BJ (cell line): ENCODE measurements at regions of chr20 and their contacts with region 1.

Region 1: DNA sequence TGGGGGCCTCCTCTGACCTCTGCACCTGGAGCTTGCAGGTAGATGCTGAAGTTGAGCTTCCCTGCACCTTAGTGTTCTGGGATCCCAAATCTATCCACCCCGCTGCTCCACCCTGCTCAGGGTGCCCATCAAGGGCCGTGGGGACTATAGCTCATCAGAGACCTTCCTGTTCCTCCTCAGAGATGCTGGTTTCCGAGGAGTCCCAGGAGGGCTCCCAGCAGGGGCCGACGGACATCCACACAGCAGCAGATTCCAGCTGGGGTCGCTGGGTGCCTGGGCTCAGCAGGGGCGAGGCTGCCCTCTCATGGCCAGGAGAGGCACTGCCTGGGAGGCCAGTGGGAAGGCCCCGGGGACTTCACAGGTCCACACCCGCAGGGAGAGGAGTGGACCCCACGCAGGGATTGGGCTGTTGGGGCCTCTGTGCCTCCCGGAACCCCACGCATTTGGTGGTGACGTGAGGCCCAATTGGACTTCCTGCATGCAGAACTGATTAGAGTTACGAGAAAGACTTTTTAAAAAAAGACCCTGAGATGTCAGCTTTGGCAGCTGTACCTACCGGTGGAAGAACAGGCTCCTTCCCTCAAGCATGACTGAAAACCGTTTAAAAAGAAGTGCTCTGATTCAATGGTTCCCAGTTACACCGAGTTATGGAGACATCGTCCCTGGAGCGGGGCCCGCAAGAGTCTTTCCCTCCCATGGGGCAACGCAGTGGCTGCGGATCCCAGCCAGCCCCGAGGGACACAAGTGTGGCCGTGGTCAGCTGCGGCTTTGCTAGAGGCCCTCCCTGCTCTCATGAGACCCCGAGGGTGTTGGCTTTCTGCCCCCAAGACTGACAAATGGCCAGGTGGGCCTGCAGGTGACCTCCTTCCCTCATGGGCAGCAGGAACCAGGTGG is 25.3 kb upstream of the SLCO4A1 start:
- DNase-seq: no peak
- H3K4me3 ChIP-seq: no peak overlapping the region
- H3K27me3 ChIP-seq: peaks cover 2% of the 10 kb centered on the region; the same call in 1 of the 2 replicates
- CTCF ChIP-seq: peak; percentile 99

Region 2: DNA sequence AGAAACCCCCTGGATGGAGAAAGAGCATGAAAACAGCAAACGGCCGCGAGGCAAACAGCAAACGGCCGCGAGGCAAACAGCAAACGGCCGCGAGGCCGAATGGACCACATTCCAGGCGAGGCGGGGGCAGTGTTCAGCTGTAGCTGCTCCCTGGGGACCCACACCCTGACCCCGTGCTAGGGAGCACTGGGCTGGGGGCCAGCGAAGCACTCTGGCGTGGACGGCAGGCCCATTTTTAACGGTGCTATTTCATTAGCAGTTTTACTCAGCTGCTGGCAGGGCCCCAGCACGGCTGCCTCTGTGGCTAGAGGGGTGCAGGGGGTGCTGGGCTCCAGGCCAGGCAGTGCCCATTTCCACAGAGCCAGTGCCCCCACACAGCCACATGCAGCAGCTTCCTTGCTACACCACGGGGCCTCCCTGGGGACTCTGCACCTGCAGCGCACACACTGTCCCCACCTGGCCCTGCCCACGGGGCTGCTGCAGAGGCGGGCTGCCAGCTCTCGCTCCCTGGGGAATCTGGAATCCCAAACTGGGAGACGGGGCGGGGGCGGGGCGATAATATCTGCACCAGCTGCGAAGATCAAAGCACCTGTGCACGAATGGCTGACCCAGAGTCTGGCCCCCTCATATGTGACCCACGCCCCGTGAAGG is 10.3 kb before region 1 on chr20:
- CTCF ChIA-PET with region 1: interaction called, 23 read pairs
- POLR2A ChIA-PET with region 1: no interaction called
- DNase-seq: no peak
- H3K4me3 ChIP-seq: no peak overlapping the region
- H3K27me3 ChIP-seq: peaks cover 2% of the 10 kb centered on the region; the same call in 1 of the 2 replicates
- CTCF ChIP-seq: no peak